Activated B cell treated with CpG ODN at 0.5 μM for 24 hours (primary cell): ENCODE measurements at regions of chr3 and their contacts with region 1.

Region 1: DNA sequence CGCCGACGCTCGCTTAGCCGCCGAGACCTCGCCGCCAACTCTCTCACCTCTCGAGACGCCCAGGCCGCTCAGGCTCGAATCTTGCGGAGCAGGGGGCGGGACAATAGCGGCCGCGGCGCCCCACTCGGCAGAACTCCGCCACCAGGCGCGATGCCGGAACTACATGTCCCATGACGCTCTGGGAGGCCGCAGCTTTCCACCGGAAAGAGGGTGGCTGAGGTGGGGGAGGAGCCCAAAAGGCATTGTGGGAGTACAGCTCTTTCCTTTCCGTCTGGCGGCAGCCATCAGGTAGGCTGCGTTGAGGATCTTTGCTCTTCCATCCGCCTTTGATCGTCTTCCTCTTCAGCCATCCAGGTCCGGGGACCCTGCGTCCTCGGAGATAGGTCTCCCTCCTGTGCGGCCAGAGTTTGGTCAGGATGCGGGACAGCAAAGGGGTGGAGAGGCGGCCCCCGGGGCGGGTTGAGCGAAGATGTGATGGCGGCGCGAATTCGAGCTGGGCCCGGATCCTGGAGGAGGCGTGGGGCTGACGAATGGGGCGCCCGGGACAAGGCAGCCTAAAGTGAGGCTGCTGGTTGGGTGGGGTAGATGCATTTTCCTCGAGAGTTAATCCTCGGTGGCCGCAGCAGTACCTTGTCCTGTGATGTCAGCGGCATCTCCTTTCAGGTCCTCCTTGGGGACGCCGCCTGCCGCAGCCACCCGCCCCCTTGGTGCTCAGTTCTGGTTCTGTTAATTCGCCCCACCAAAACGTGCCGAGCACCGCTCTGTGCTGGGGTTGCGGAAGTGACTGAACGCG is at the starts of genes NKIRAS1 and RPL15:
- DNase-seq: peak; percentile 90
- ATAC-seq: peak; percentile 91
- H3K4me3 Mint-ChIP-seq: peak within 1 kb of the TSS; percentile 98
- H3K27ac Mint-ChIP-seq: peak within 1 kb of the TSS; percentile 95
- H3K4me1 Mint-ChIP-seq: peaks cover 52% of the 10 kb centered on the region
- H3K27me3 Mint-ChIP-seq: no peaks in the 10 kb centered on the region
- CTCF ChIP-seq: no peak
- total RNA-seq, gene NKIRAS1: 3.4 and 4.8 TPM in 2 replicates
- total RNA-seq, gene RPL15: 2,710 and 2,947 TPM in 2 replicates

Region 2: DNA sequence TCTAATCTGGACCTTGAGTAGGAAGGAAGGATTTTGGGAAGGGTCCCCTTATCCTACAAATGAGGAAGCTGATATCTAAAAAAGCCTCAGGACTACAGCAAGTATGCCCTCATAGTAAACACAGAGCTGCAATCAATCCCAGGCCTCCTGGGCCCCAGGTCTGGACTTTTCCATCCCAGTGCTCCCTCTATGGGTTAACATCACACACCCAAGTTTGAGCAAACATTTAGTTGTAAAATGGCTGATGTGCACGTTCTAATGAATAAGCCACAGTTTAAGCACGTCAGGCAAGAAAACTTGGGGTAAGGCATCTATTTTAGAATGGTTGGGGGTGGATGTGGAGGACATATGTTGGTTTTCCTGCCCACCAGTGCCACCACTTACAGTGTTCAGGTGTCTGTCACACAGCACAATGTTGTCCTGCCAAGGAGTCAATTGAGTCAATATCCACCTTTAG is 155.6 kb before region 1 on chr3:
- CTCF ChIA-PET with region 1: interaction called, 3 read pairs
- POLR2A ChIA-PET with region 1: interaction called, 7 read pairs
- intact Hi-C with region 1: loop called (anchors 2 kb)
- DNase-seq: no peak
- ATAC-seq: no peak
- H3K4me3 Mint-ChIP-seq: no peak overlapping the region
- H3K27ac Mint-ChIP-seq: peak overlapping the region; percentile 67
- H3K4me1 Mint-ChIP-seq: peaks cover 34% of the 10 kb centered on the region
- H3K27me3 Mint-ChIP-seq: no peaks in the 10 kb centered on the region
- CTCF ChIP-seq: no peak

Region 3: DNA sequence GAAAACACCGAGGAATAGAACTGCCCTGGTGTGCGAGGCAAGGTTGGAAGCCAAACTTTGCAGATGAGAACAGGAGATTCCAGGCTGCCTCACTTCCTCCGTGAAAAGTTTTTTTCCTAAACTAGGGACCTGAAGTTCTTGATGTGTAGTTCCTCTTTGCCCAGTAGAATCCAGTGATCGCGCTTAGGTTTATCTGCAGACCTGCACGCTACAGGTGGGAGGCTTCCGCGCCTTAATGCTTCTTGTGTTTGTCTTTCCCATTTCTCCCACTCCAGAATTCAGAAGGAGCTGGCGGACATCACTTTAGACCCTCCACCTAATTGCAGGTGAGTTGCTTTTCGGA is 105.9 kb before region 1 on chr3:
- CTCF ChIA-PET with region 1: interaction called, 4 read pairs
- POLR2A ChIA-PET with region 1: interaction called, 19 read pairs
- intact Hi-C with region 1: loop called (anchors 1 kb)
- DNase-seq: no peak
- ATAC-seq: no peak
- H3K4me3 Mint-ChIP-seq: peak overlapping the region; percentile 93
- H3K27ac Mint-ChIP-seq: peak overlapping the region; percentile 93
- H3K4me1 Mint-ChIP-seq: peaks cover 60% of the 10 kb centered on the region
- H3K27me3 Mint-ChIP-seq: no peaks in the 10 kb centered on the region
- CTCF ChIP-seq: no peak

Region 4: GRCh38 chr3:23859016-23859743 is 57.9 kb before region 1 on chr3:
- CTCF ChIA-PET with region 1: no interaction called
- POLR2A ChIA-PET with region 1: interaction called, 12 read pairs
- intact Hi-C with region 1: loop called (anchors 1 kb)
- DNase-seq: no peak
- ATAC-seq: no peak
- H3K4me3 Mint-ChIP-seq: no peak overlapping the region
- H3K27ac Mint-ChIP-seq: no peak overlapping the region
- H3K4me1 Mint-ChIP-seq: peaks cover 54% of the 10 kb centered on the region
- H3K27me3 Mint-ChIP-seq: no peaks in the 10 kb centered on the region
- CTCF ChIP-seq: no peak

Region 5: DNA sequence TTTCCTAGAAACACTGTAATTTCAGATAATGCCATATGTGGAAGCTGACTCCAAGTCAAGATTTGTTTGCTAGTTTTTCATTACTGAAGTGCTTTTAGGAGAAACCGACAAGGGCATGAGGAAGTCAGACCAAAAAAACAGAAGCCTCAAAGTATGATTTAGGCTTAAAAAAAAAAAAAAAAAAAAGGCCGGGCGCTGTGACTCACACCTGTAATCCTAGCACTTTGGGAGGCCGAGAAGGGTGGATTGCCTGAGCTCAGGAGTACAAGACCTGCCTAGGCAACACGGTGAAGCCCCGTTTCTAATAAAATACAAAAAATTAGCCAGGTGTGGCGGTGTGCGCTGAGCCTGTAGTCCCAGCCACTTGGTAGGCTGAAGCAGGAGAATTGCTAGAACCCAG is 11.4 kb after region 1 on chr3:
- CTCF ChIA-PET with region 1: no interaction called
- POLR2A ChIA-PET with region 1: interaction called, 26 read pairs
- intact Hi-C with region 1: no loop called
- DNase-seq: no peak
- ATAC-seq: no peak
- H3K4me3 Mint-ChIP-seq: no peak overlapping the region
- H3K27ac Mint-ChIP-seq: no peak overlapping the region
- H3K4me1 Mint-ChIP-seq: peaks cover 15% of the 10 kb centered on the region
- H3K27me3 Mint-ChIP-seq: no peaks in the 10 kb centered on the region
- CTCF ChIP-seq: no peak

Region 6: DNA sequence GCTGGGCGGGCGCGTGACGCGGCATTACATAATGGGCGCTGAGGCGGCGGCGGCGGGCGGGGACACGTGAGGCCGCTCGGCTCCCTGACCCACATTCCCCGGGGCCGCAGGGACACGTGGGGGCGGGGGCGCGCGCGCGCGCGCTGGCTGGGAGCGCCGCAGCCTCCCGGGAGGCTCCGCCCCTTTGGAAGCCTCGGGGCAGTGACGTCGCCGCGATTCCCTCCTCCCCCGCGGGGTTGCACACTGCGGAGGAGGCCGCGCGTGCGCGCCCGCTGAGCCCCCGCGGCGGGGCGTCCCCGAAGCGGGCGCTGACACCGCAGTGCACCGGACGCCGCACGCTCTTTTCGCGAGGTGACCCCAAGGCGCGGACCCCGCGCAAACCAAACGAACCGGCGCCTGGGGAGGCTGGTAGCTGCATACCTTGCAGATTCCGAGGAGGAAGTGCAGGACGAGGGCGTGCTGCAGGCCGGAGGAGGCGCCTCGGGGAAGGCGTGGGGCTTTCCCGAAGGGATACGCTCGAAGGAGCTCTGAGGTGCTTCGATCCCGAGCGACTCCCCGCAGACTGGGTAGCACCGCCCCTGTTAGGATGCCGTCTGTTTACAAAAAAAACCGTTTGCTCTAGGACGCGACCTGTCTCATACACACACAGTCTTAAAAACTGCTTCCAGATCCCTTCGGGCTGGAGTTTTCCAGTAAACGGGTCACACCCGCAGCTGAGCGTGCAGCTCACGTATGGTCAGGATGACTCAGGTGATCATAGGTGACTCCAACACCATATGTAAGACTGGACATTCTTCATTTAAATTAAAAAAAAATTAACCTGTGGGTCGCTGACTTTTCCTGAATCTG is 29.0 kb after region 1 on chr3:
- CTCF ChIA-PET with region 1: interaction called, 5 read pairs
- POLR2A ChIA-PET with region 1: interaction called, 124 read pairs
- intact Hi-C with region 1: loop called (anchors 1 kb)
- DNase-seq: peak; percentile 97
- ATAC-seq: peak; percentile 79
- H3K4me3 Mint-ChIP-seq: peak overlapping the region; percentile 86
- H3K27ac Mint-ChIP-seq: peak overlapping the region; percentile 94
- H3K4me1 Mint-ChIP-seq: peaks cover 44% of the 10 kb centered on the region
- H3K27me3 Mint-ChIP-seq: no peaks in the 10 kb centered on the region
- CTCF ChIP-seq: no peak

Region 7: DNA sequence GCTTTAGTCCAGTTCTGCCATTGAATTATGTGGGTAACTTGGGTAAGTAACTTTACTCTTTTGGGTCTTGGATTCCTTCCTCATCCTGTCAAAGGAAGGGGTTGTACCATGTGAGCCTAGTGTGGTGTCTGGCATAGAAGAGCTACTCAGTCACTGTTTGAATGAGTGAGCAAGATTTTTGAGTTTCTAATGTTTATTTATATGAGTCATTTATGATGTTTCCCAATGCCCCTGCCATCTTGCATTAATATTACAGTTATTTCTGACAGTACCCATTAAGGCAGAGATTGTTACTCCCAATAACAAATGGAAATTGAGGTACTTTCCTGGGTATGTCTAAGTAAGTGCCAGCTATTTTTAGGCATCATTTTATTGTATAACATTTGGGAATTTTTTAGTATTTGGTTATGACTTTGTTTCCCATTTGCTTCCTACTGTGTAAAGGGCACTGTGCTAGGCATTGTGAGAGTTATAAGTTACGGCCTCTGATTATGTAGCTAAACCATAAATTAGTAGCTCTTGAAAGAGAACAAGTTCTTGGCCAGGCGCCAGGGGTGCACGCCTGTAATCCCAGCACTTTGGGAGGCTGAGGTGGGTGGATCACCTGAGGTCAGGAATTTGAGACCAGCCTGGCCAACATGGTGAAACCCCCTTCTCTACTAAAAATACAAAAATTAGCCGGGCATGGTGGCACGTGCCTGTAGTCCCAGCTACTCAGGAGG is 51.5 kb after region 1 on chr3:
- CTCF ChIA-PET with region 1: no interaction called
- POLR2A ChIA-PET with region 1: no interaction called
- intact Hi-C with region 1: no loop called
- DNase-seq: no peak
- ATAC-seq: no peak
- H3K4me3 Mint-ChIP-seq: no peak overlapping the region
- H3K27ac Mint-ChIP-seq: no peak overlapping the region
- H3K4me1 Mint-ChIP-seq: no peaks in the 10 kb centered on the region
- H3K27me3 Mint-ChIP-seq: no peaks in the 10 kb centered on the region
- CTCF ChIP-seq: no peak

Region 8: GRCh38 chr3:24101676-24102168 is 184.6 kb after region 1 on chr3:
- CTCF ChIA-PET with region 1: no interaction called
- POLR2A ChIA-PET with region 1: no interaction called
- intact Hi-C with region 1: no loop called
- DNase-seq: no peak
- ATAC-seq: no peak
- H3K4me3 Mint-ChIP-seq: no peak overlapping the region
- H3K27ac Mint-ChIP-seq: no peak overlapping the region
- H3K4me1 Mint-ChIP-seq: no peaks in the 10 kb centered on the region
- H3K27me3 Mint-ChIP-seq: peaks cover 2% of the 10 kb centered on the region
- CTCF ChIP-seq: no peak

Region 9: DNA sequence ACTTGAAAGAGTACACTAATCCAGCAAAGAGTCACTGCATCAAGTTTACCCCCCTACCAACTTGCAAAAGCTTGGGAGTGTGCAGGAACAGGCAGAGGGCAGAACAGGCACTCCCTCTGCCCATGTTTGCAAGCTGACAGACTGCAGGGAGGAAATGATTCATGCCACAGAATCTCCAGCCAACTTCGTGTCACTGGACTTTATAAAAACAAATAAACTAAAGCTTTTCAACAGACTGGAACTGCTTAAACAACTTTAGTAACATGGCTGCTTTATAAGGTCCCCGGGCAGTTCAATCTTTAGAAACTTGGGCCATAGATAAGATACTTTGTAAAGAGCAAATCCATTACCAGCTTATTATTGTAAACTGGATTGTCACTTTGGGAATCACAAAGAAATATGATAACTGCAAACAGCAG is 448.1 kb after region 1 on chr3:
- CTCF ChIA-PET with region 1: no interaction called
- POLR2A ChIA-PET with region 1: no interaction called
- intact Hi-C with region 1: no loop called
- DNase-seq: no peak
- ATAC-seq: no peak
- H3K4me3 Mint-ChIP-seq: no peak overlapping the region
- H3K27ac Mint-ChIP-seq: no peak overlapping the region
- H3K4me1 Mint-ChIP-seq: no peaks in the 10 kb centered on the region
- H3K27me3 Mint-ChIP-seq: no peaks in the 10 kb centered on the region
- CTCF ChIP-seq: no peak

Region 10: GRCh38 chr3:24494618-24495325 is 577.7 kb after region 1 on chr3 and contains the start of gene THRB:
- CTCF ChIA-PET with region 1: no interaction called
- POLR2A ChIA-PET with region 1: no interaction called
- intact Hi-C with region 1: loop called (anchors 10 kb)
- DNase-seq: peak; percentile 57
- ATAC-seq: peak; percentile 72
- H3K4me3 Mint-ChIP-seq: peak within 1 kb of the TSS; percentile 90
- H3K27ac Mint-ChIP-seq: peak within 1 kb of the TSS; percentile 78
- H3K4me1 Mint-ChIP-seq: peaks cover 15% of the 10 kb centered on the region
- H3K27me3 Mint-ChIP-seq: peaks cover 35% of the 10 kb centered on the region
- CTCF ChIP-seq: no peak
- total RNA-seq, gene THRB: 0.31 and 0.86 TPM in 2 replicates